Activated CD8-positive, alpha-beta T cell treated with anti-CD3 and anti-CD28 coated beads, Interleukin-2, amount 10 ng/mL, durations not matched to agents 7 days and 5 days (primary cell): ENCODE measurements at regions of chr12 and their contacts with region 1.

Region 1: DNA sequence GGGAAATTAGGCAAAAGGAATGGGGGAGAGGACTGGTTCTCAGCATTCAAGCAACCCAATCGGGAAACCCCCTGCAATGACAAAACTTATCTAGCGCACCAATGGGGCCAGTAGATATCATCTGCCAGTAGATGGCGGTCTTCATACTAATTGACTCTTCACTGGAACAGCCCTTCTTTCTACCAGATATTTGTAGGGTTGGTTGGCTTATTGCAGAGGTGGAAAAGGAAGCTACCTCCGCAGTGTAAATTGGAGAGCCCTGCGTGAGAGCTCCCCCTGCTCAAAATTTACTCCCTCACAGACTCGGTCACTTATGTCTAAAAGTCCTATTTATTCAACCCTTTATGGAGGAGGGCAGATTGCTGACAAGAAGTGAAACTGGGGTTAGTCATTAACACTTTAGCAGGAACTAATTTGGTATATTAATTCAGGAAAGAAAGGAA is 166.1 kb upstream of the CCND2 start:
- DNase-seq: peak; percentile 89
- ATAC-seq: peak; percentile 93
- H3K4me3 Mint-ChIP-seq: peak overlapping the region; percentile 60
- H3K27ac Mint-ChIP-seq: peak overlapping the region; percentile 92
- H3K4me1 Mint-ChIP-seq: peaks cover 64% of the 10 kb centered on the region
- H3K27me3 Mint-ChIP-seq: peaks cover 2% of the 10 kb centered on the region

Region 2: GRCh38 chr12:3761116-3761735 is 346.2 kb before region 1 on chr12:
- CTCF ChIA-PET with region 1: no interaction called
- POLR2A ChIA-PET with region 1: no interaction called
- DNase-seq: no peak
- ATAC-seq: no peak
- H3K4me3 Mint-ChIP-seq: no peak overlapping the region
- H3K27ac Mint-ChIP-seq: no peak overlapping the region
- H3K4me1 Mint-ChIP-seq: no peaks in the 10 kb centered on the region
- H3K27me3 Mint-ChIP-seq: no peaks in the 10 kb centered on the region

Region 3: DNA sequence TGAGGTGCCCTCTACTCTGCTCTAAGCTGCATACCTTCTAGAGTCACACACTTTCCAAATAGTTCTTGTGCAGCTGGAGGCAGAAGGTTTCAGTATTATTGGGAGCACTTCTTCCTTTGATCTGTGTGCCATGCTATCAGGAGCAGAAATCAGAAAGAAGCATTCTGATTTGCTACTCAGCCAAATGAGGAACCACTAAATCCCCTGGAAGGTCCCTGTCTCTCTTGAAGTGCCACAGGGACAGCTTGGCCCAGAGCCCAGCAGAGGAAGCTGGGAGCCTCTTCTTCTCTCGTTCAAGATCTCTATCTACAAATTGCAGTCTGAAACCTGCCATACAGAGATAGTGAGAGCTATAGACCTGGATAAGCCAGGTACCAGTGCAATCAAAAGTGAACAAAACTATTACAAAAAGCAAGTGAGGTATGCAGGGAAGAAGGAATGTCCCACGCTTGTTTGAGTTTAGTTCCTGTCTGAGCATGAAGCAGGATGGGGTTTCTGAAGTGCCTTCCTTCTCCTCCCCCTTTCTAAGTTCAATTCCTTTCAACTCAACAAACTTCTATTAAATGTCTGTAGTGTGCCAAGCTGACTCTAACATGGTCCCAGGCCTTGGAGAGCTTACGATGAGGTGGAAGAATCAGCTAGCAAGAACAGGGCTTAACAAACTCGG is 133.3 kb before region 1 on chr12:
- CTCF ChIA-PET with region 1: interaction called, 10 read pairs
- POLR2A ChIA-PET with region 1: no interaction called
- DNase-seq: no peak
- ATAC-seq: peak; percentile 42
- H3K4me3 Mint-ChIP-seq: peak overlapping the region; percentile 20
- H3K27ac Mint-ChIP-seq: peak overlapping the region; percentile 81
- H3K4me1 Mint-ChIP-seq: peaks cover 60% of the 10 kb centered on the region
- H3K27me3 Mint-ChIP-seq: peaks cover under 1% of the 10 kb centered on the region

Region 4: DNA sequence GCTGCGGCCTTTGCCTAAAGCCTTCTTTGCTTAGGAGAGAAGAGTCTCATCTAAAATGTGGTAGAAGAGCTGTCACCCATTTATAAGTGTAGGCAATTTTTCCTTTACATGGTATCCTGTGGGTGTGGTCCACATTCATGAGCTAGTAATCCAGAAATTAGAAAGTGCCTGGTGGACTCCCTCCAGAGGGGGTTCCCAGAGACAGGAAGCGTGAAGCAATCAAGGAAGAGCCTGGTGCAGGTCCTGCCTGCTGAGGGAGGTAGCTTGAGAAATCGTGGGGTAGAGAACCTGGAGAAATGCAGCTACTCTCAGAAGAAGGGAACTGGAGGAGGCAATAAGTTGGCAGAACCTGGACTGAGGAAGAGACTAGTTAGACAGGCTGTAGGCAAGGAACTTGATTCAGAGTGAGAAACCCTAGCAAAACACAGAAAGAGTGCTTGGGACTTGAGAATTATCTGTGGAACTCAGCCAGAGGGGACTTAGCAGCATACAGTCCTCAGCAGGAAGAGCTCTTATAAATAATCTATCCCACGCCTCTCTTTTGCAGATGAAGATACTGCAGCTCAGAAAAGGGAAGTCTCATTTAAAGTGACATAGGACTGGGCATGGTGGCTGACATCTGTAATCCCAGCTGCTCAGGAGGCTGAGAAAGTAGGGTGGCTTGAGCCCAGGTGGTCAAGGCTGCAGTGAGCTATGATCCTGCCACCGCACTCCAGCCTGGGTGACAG is 16.3 kb before region 1 on chr12:
- CTCF ChIA-PET with region 1: interaction called, 16 read pairs
- POLR2A ChIA-PET with region 1: no interaction called
- DNase-seq: no peak
- ATAC-seq: no peak
- H3K4me3 Mint-ChIP-seq: no peak overlapping the region
- H3K27ac Mint-ChIP-seq: no peak overlapping the region
- H3K4me1 Mint-ChIP-seq: peaks cover 6% of the 10 kb centered on the region
- H3K27me3 Mint-ChIP-seq: peaks cover 10% of the 10 kb centered on the region

Region 5: GRCh38 chr12:4141348-4142270 is 34.2 kb after region 1 on chr12:
- CTCF ChIA-PET with region 1: interaction called, 94 read pairs
- POLR2A ChIA-PET with region 1: interaction called, 20 read pairs
- DNase-seq: no peak
- ATAC-seq: no peak
- H3K4me3 Mint-ChIP-seq: peak overlapping the region; percentile 74
- H3K27ac Mint-ChIP-seq: peak overlapping the region; percentile 97
- H3K4me1 Mint-ChIP-seq: peaks cover 90% of the 10 kb centered on the region
- H3K27me3 Mint-ChIP-seq: no peaks in the 10 kb centered on the region

Region 6: GRCh38 chr12:4164559-4165558 is 57.4 kb after region 1 on chr12:
- CTCF ChIA-PET with region 1: interaction called, 19 read pairs
- POLR2A ChIA-PET with region 1: interaction called, 7 read pairs
- DNase-seq: peak; percentile 77
- ATAC-seq: peak; percentile 97
- H3K4me3 Mint-ChIP-seq: peak overlapping the region; percentile 75
- H3K27ac Mint-ChIP-seq: peak overlapping the region; percentile 94
- H3K4me1 Mint-ChIP-seq: peaks cover 55% of the 10 kb centered on the region
- H3K27me3 Mint-ChIP-seq: peaks cover 2% of the 10 kb centered on the region